HAP-1 (cell line): ENCODE measurements at regions of chr13 and their contacts with region 1.

Region 1: GRCh38 chr13:51118809-51119431 is 7.8 kb upstream of the C13orf42 start:
- DNase-seq: no peak
- H3K4me3 ChIP-seq: no peak overlapping the region
- H3K4me1 ChIP-seq: no peaks in the 10 kb centered on the region
- H3K27me3 ChIP-seq: no peaks in the 10 kb centered on the region

Region 2: GRCh38 chr13:51015973-51016372 is 102.9 kb before region 1 on chr13:
- in situ Hi-C with region 1: no loop called
- DNase-seq: no peak
- H3K4me3 ChIP-seq: no peak overlapping the region
- H3K4me1 ChIP-seq: no peaks in the 10 kb centered on the region
- H3K27me3 ChIP-seq: 0 out of 2 replicates have a peak, but pooled peaks cover 2% of the 10 kb centered on the region

Region 3: DNA sequence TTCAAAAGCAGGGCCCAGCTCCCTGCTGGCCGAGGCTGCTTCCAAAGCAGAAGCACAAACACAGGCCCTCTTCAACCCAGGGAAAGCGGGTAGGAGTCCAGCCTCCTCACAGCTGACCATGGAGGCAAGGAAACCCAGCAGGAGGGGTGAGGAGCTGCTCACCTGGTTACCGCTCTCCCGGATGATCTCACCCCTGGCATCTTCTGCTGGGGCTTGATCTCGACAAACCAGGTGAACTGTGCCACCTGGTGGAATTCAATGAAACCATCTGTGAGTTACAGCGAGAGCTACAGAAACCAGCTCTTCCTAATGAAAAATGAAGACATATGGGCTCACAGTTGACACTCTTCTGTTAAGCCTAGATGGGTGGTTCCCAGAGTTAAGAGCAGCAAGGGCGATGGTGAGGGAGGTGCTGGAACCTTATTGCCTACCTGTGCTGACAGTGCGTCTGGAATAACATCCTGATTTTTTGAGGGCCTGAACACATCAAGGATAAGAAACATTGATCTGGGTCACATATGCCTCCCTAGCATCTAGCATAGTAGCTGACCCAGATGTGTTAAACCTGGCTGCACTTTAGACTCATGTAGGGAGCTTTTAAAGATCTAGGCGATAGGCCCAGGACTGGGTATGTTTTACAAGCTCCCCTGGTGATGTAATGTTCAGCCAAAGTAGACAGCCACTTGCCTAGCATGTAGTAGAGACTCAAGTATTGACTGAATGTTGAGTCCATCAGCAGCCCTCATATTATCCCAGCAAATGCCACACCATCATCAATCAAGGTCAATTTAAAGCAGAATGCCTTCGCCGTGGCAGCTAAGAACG is 679.0 kb after region 1 on chr13:
- in situ Hi-C with region 1: loop called (anchors 10 kb)
- DNase-seq: peak; percentile 40 to 56
- H3K4me3 ChIP-seq: no peak overlapping the region
- H3K4me1 ChIP-seq: peaks cover 15% of the 10 kb centered on the region
- H3K27me3 ChIP-seq: no peaks in the 10 kb centered on the region; the same call in 1 of the 2 replicates